MCF 10A (cell line): ENCODE measurements at regions of chr1 and their contacts with region 1.

Region 1: DNA sequence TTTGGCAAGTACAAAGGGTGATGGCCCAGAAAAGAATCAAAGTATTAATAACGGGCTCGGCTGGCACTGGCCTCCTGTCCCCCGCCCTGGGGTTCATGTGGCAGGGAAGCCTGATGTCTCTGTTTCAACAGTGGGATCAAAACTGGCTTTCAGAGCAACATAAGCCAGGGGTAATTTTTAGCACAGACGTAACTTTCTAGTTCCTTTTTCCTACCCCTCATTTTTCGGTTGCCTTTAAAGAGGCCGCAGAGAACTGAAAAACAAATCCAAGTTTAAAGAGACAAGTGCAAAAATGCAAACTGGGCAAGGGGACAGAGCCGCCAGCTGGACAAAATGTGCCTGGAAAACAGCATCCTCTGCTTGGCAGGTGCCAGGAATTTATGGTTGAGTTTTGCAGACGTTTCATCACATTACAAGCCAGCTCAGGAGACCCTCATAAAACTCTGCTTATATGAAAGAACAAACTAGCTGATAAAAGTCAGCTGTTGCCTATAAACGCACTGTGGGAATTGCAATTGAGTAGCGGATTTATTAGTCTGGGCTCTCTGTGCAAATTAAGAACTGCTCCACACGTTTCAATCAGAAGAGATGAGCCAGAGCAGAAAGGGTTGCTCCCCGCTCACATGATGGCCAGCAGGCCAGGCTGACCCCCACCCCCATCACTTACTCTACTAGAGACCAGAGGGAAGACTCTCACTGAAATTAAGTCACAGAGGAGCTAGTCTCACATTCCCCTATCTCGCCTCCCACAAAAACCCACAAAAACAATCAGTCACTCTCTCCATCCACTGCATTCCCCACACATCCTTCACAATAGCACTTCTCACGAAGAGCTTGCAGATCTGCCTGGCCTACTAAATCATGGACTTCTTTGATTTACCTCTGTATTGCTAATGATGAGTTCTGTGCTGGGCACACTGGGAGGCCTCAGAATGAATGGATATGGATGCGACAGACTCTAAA is 15.8 kb upstream of the CDCA8 start:
- DNase-seq: no peak
- H3K4me3 Mint-ChIP-seq: no peak overlapping the region
- H3K27ac Mint-ChIP-seq: no peak overlapping the region
- H3K4me1 Mint-ChIP-seq: no peaks in the 10 kb centered on the region
- H3K27me3 Mint-ChIP-seq: peaks cover 6% of the 10 kb centered on the region
- CTCF ChIP-seq: no peak

Region 2: DNA sequence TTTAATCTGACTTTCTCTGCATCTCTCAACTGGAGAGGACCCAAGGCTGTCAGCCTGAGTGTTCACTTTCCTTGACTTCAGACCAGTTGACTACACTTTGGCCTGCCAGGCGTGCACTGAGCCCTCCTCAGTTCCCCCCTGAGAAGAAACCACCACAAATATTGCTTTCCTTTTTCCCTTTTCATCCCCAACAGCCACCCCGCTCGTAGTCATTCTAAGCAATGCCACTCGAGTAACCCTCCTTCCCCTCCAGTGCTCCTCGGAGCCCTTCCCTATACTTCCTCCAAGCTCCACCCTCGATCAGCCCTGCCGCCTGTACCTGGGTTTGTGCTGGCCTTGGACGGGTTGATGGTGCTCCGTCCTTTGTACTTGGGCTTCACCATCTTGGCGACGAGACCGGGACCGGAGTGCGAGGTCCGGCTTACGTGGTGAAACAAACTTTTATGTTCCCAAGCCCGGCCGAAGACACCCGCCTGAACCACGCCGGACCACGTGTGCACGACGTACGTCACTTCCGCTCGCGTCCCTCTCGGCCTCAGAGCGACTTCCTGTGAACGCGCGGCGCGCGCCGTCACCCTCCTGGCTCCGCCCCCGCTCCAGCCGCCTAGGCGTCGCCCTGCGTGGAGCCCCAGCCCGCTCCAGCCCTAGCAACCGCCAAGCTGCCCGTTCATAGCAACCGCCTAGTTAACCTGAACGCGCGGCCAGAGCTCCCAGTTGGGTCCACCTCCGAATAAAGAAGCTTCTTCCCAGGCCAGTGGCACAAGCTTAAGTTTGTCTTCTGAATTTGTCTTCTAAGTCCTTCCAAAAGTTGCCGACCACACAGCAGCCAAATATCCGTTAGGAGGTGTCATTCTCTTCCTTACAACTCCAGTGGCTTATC is 80.9 kb before region 1 on chr1 and contains the start of gene GNL2:
- CTCF ChIA-PET with region 1: interaction called, 271 read pairs
- POLR2A ChIA-PET with region 1: interaction called, 10 read pairs
- intact Hi-C with region 1: no loop called
- DNase-seq: peak; percentile 94
- H3K4me3 Mint-ChIP-seq: peak within 1 kb of the TSS; percentile 100
- H3K27ac Mint-ChIP-seq: peak within 1 kb of the TSS; percentile 100
- H3K4me1 Mint-ChIP-seq: no peaks in the 10 kb centered on the region
- H3K27me3 Mint-ChIP-seq: no peaks in the 10 kb centered on the region
- CTCF ChIP-seq: no peak
- total RNA-seq, gene GNL2: 103 and 133 TPM in 2 replicates

Region 3: GRCh38 chr1:38559161-38559824 is 882.7 kb after region 1 on chr1:
- CTCF ChIA-PET with region 1: no interaction called
- POLR2A ChIA-PET with region 1: no interaction called
- intact Hi-C with region 1: no loop called
- DNase-seq: no peak
- H3K4me3 Mint-ChIP-seq: no peak overlapping the region
- H3K27ac Mint-ChIP-seq: no peak overlapping the region
- H3K4me1 Mint-ChIP-seq: no peaks in the 10 kb centered on the region
- H3K27me3 Mint-ChIP-seq: peaks cover 49% of the 10 kb centered on the region
- CTCF ChIP-seq: no peak